ENCODE measurements at regions of chr5 and their contacts with region 1.

Region 1: DNA sequence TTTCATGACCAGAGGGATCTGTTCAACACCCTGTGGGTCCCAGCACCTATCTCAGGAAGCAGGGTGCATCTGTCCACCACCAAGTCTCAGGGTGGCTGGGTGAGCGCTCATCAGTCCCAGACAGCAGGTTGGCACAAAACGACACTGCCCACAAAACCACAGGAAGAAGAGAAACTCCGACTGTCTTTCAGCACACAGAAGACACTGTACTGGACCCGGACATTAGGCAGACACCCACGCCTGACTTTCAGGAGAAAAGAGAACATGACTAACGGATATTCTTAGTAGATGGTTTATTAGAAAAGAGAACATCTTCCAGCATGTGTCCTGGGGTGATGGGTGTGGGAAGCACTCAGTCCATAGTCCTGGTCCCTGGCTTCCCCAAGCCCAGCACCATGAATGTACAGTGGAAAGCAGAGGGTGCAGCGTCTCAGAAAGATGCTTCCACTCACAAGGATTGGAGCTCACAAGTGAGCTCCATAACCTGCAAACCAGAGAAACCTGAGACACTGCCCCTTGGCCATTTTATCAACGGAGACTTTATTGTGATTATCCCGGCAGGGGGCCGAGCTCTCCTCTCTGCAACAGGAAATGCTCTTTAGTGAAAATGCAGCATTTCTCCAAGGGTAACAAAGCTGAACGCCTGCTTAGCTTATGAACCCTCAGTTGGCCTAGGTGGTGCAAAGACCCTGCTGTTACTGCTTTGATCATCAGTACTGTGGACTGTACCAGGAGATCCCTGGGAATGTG is 35.8 kb upstream of the LCP2 start:
- DNase-seq: peak; percentile 86
- H3K4me3 Mint-ChIP-seq: peak overlapping the region; percentile 66
- H3K27ac Mint-ChIP-seq: no peak overlapping the region
- H3K4me1 Mint-ChIP-seq: peaks cover 62% of the 10 kb centered on the region
- H3K27me3 Mint-ChIP-seq: no peaks in the 10 kb centered on the region

Region 2: DNA sequence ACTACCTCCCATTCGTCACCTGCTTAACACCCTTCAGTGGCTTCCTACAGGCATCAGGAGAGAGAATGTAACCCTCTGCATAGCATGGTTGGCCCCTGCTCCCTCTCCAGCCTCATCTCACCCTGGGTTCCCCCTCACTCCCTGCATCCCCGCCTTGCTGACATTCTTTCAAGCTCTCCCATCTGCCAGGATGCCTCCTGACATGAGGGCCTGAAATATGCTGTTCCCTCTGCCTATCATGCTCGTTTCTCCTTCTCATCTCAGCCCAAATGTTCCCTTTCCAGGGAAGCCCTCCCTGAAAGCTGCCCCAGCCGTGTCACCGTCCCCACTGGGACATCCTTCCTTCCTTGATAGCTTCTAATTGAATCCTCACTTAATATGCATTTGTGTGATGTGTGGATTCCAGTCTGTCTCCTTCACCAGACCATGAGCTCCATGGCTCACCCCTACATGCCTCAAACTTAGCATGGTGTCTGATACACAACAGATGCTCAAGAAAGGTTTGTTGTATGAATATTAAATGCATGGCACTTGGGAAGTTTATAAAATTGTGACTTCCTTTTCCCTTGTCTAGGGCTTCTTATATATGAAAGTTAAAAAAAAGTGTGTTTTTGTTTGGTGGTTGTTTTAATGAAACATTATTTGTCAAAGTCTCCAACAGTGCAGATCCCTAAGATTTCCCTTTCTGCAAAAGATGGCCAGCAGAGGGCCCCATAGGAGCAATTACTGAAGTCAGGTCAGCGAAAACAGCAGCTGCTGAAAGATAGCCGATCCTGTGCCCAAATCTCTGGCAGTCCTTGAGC is 107.8 kb before region 1 on chr5:
- CTCF ChIA-PET with region 1: interaction called, 221 read pairs
- POLR2A ChIA-PET with region 1: no interaction called
- intact Hi-C with region 1: no loop called
- DNase-seq: peak; percentile 81
- H3K4me3 Mint-ChIP-seq: no peak overlapping the region
- H3K27ac Mint-ChIP-seq: no peak overlapping the region
- H3K4me1 Mint-ChIP-seq: peaks cover 3% of the 10 kb centered on the region
- H3K27me3 Mint-ChIP-seq: no peaks in the 10 kb centered on the region

Region 3: DNA sequence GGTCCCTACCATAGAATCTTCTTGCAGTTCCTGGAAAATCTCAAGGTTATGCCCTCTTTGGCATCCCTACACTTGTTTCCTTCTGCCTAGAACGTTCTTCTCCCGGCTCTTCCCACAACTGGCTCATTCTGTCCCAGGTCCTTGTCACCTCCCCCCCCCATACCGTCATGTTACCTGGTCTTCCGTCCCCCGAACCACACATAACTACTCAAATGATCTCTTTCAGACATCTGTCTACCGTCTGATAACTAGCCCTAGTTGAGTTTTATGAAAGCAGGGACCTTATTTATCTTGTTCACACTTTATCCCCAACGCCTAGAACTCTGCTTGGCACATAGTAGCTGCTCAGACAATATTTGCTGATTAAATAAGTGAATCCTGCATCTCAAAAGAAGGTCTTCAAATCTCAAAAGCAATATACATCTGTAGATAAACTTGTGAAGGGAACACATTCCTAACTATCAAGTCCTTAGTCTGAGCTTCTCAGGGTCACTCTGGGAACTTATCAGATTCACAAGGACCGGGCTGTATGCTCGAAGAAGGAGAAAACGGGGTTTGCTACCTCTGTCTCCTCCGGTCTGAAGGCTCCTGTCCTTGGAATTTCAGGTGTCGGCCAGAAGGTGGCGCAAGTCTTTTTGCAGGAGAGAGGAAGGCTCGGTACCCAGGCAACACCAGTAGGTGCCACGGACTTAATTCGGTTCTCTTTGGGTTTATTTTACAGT is 65.7 kb before region 1 on chr5:
- CTCF ChIA-PET with region 1: interaction called, 290 read pairs
- POLR2A ChIA-PET with region 1: interaction called, 36 read pairs
- intact Hi-C with region 1: loop called (anchors 1 kb)
- DNase-seq: peak; percentile 87
- H3K4me3 Mint-ChIP-seq: peak overlapping the region; percentile 60
- H3K27ac Mint-ChIP-seq: peak overlapping the region; percentile 85
- H3K4me1 Mint-ChIP-seq: peaks cover 87% of the 10 kb centered on the region
- H3K27me3 Mint-ChIP-seq: no peaks in the 10 kb centered on the region

Region 4: GRCh38 chr5:170293273-170293672 is 40.1 kb before region 1 on chr5:
- CTCF ChIA-PET with region 1: interaction called, 111 read pairs
- POLR2A ChIA-PET with region 1: interaction called, 144 read pairs
- intact Hi-C with region 1: loop called (anchors 1 kb)
- DNase-seq: peak; percentile 78
- H3K4me3 Mint-ChIP-seq: peak overlapping the region; percentile 99
- H3K27ac Mint-ChIP-seq: peak overlapping the region; percentile 99
- H3K4me1 Mint-ChIP-seq: peaks cover 70% of the 10 kb centered on the region
- H3K27me3 Mint-ChIP-seq: no peaks in the 10 kb centered on the region

Region 5: GRCh38 chr5:170312666-170313065 is 20.7 kb before region 1 on chr5:
- CTCF ChIA-PET with region 1: interaction called, 24 read pairs
- POLR2A ChIA-PET with region 1: interaction called, 38 read pairs
- intact Hi-C with region 1: loop called (anchors 1 kb)
- DNase-seq: peak; percentile 88
- H3K4me3 Mint-ChIP-seq: peak overlapping the region; percentile 79
- H3K27ac Mint-ChIP-seq: peak overlapping the region; percentile 95
- H3K4me1 Mint-ChIP-seq: peaks cover 51% of the 10 kb centered on the region
- H3K27me3 Mint-ChIP-seq: no peaks in the 10 kb centered on the region

Region 6: DNA sequence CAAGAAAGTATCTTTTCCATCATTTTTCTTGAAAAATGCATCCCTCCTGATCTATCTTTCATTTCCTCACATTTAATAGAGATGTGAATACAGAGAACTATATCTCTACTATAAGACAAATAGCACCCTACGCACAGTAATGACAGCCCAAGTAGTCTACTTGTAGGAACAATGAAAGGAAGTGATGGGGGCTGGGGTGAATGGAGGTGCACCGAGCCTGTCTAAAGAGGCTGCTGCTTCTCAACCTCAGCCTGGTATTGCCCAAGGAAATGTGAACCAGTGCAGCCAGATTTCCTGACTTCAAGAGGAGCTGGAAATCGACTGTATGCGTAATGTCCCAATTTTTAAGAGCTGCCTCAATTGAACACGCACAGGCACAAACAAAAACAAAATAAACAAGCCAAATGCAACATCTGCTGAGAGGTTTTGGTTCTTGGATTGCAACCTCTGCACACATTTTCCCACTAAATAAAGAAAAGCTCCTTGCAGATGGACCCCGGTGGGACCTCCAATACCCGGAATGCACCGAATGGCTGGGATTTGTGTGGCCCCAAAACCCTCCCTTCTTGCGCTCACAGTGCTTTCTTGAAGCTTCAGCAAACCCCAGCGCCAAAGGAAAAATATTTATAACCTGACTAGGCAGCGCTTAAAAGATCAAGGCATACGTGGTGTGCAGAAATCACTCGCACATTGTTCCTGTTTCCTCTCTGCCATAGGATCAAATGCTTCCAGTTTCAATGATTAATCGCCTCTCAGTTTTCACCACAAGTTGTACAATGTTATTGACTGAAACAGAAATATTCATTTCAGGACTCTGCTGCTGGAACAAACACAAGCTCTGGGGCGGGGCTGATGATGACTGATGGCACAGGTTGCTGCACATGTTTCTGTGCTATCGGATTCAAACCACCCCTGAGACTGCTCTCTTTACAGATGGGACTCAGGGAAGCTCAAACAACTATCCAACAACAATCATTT is 238.8 kb after region 1 on chr5:
- CTCF ChIA-PET with region 1: no interaction called
- POLR2A ChIA-PET with region 1: no interaction called
- intact Hi-C with region 1: loop called (anchors 5 kb)
- DNase-seq: peak; percentile 90
- H3K4me3 Mint-ChIP-seq: no peak overlapping the region
- H3K27ac Mint-ChIP-seq: no peak overlapping the region
- H3K4me1 Mint-ChIP-seq: peaks cover 17% of the 10 kb centered on the region
- H3K27me3 Mint-ChIP-seq: peaks cover 55% of the 10 kb centered on the region